Activated CD8-positive, alpha-beta T cell treated with anti-CD3 and anti-CD28 coated beads, Interleukin-2, amount 10 ng/mL, durations not matched to agents 7 days and 5 days (primary cell): ENCODE measurements at regions of chr4 and their contacts with region 1.

Region 1: GRCh38 chr4:145945431-145946155 is 7.0 kb upstream of the ZNF827 start:
- DNase-seq: no peak
- ATAC-seq: no peak
- H3K4me3 Mint-ChIP-seq: no peak overlapping the region
- H3K27ac Mint-ChIP-seq: no peak overlapping the region
- H3K4me1 Mint-ChIP-seq: no peaks in the 10 kb centered on the region
- H3K27me3 Mint-ChIP-seq: peaks cover 31% of the 10 kb centered on the region

Region 2: GRCh38 chr4:145851511-145852201 is 93.9 kb before region 1 on chr4:
- CTCF ChIA-PET with region 1: no interaction called
- POLR2A ChIA-PET with region 1: no interaction called
- DNase-seq: no peak
- ATAC-seq: no peak
- H3K4me3 Mint-ChIP-seq: no peak overlapping the region
- H3K27ac Mint-ChIP-seq: peak overlapping the region; percentile 56
- H3K4me1 Mint-ChIP-seq: peaks cover 6% of the 10 kb centered on the region
- H3K27me3 Mint-ChIP-seq: no peaks in the 10 kb centered on the region

Region 3: DNA sequence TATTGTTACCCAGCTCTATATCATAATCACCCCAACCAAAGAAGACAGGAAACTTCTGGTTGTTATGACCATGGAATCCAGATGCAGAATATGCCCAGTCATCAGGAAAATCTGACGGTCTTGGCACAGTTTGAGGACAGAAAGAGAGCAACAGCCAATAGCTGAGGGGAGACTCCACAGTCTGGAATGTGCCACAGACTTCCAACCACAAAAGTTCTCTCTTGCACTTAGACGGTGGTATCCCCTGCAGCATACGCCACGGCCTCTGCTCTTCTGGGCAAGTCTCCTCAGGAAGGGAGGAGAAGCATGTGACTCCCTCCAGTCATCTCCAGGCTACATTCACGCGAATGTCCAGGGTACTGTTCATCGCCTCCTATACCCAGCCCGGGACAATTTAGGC is 25.4 kb before region 1 on chr4:
- CTCF ChIA-PET with region 1: no interaction called
- POLR2A ChIA-PET with region 1: no interaction called
- DNase-seq: no peak
- ATAC-seq: no peak
- H3K4me3 Mint-ChIP-seq: no peak overlapping the region
- H3K27ac Mint-ChIP-seq: no peak overlapping the region
- H3K4me1 Mint-ChIP-seq: peaks cover 6% of the 10 kb centered on the region
- H3K27me3 Mint-ChIP-seq: no peaks in the 10 kb centered on the region

Region 4: GRCh38 chr4:145956288-145956890 is 10.8 kb after region 1 on chr4:
- CTCF ChIA-PET with region 1: interaction called, 15 read pairs
- POLR2A ChIA-PET with region 1: no interaction called
- DNase-seq: peak; percentile 51
- ATAC-seq: peak; percentile 57
- H3K4me3 Mint-ChIP-seq: no peak overlapping the region
- H3K27ac Mint-ChIP-seq: no peak overlapping the region
- H3K4me1 Mint-ChIP-seq: no peaks in the 10 kb centered on the region
- H3K27me3 Mint-ChIP-seq: peaks cover 9% of the 10 kb centered on the region